ENCODE measurements at regions of chr4 and their contacts with region 1.

Region 1: DNA sequence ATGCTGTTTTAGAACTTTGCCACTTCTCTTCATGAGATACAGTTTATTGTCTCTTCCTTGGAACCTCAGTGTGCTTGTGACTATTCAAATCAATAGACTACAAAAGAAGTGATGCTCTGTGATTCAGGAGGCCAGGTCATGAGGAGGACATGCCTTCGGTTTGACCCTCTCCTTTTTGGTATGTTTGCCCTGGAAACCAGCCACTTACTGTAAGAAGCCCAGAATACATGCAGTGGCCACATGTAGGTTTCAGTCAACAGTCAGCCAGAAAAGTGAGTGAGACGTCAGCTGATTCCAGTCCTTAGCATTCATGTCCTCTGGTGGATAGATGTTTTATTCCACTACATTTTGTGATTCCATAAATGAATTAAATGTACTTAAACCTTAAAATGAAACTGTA is 328.7 kb downstream of the PCDH18 start:
- DNase-seq: no peak
- ATAC-seq: no peak
- H3K4me3 ChIP-seq: no peak overlapping the region
- H3K27ac ChIP-seq: no peak overlapping the region
- H3K4me1 ChIP-seq: no peaks in the 10 kb centered on the region
- H3K27me3 ChIP-seq: no peaks in the 10 kb centered on the region
- CTCF ChIP-seq: no peak

Region 2: DNA sequence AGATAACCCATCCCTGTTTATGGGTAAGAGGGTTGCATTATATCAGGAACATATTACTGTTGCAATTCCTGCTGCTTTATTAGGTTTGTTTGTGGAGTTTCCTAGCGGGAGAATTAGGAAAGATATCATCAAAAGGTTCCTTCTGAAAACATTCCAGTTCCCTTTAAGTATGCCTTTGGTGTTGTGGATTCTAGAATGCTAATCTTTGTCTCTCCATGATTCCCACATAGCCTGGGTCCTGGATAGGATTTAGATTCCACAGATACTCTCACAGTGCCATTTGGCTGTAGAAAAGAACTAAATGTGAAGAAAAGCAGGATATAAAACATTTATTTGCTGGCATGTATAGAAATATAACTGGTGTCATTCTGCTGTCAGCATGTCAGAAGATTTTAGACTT is 10.0 kb before region 1 on chr4:
- intact Hi-C with region 1: loop called in 1 of 2 experiments (anchors 1 kb)
- DNase-seq: no peak
- ATAC-seq: no peak
- H3K4me3 ChIP-seq: no peak overlapping the region
- H3K27ac ChIP-seq: no peak overlapping the region
- H3K4me1 ChIP-seq: no peaks in the 10 kb centered on the region
- H3K27me3 ChIP-seq: no peaks in the 10 kb centered on the region
- CTCF ChIP-seq: no peak

Measured in psoas muscle (tissue), 8 donors.